ENCODE measurements at regions of chr18 and their contacts with region 1.

Region 1: DNA sequence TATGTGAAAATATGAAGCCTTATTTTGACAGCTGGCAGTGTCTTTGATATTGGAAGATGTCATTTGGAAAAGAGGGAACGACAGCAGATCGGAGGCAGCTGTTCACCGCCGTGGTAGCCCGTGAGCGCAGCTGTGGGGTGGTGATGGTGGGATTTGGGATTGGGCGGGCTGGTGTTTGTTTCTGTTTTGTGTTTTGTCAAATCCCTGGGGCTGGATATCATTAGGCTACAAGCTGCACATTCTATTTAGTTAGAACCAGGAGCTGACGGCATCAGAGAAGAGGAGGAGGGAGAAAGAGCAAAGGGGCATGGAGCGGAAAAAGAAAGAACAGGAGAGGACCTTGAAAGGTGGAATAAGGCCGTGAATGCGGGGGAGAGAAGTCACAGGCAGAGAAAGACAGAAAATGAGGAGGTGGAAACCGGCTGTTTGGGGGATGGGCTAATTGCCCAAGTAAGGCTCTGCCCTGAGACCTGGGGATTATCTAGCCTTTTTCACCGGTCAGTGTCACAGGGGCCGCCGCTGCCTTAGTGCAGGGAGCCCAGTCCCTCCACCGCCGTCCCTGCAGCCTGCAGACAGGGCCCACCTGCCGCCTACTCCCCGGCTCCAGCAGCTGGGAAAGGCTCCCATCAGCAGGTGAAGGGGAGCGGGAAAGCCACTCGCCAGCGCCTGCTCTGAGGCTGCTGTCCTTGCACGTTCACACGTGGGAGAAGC is 88.0 kb downstream of the ZCCHC2 start:
- DNase-seq: no peak
- H3K4me3 ChIP-seq: no peak overlapping the region
- H3K27ac ChIP-seq: no peak overlapping the region
- H3K27me3 ChIP-seq: peaks cover 12% of the 10 kb centered on the region
- CTCF ChIP-seq: no peak

Region 2: GRCh38 chr18:62957885-62958472 is 347.1 kb after region 1 on chr18:
- in situ Hi-C with region 1: loop called (anchors 25 kb)
- DNase-seq: peak; percentile 56
- H3K4me3 ChIP-seq: no peak overlapping the region
- H3K27ac ChIP-seq: no peak overlapping the region
- H3K27me3 ChIP-seq: no peaks in the 10 kb centered on the region
- CTCF ChIP-seq: peak; percentile 56

Measured in brain microvascular endothelial cell (primary cell).